HepG2 (cell line): ENCODE measurements at regions of chr4 and their contacts with region 1.

Region 1: DNA sequence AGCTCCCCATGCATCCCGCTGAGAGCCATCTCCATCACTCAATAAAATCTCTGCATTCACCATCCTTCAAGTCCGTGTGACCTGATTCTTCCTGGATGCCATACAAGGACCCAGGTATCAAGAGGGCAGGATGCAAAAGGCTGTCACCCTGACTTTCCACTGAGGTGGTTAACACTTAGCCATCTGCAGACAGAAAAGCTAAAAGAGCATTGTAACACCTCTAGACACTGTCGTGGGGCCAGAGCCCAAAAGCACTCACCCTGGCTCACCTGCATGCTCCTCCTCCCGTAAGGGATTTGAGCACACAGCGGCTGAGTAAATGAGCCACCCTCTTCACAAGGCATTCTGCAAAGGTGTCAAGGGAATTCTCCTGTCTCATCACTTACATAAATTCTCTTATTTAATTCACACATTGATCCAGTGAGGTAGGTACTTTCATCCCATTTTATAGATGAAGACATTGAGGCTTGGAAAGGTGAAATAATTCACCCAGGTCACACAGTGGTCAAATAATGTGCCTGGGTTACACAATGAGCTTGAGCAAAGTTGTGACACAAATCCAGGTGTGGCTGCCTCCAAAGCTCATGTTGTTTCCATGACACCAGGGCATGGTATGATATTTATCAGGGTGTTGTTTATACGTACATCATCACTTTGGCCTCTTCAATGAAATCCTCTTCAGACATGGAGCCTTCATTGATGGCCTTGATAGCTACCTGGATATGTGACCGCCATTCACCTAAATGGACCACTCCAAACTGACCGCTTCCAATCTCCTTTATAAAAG is 48.0 kb downstream of the TXK start:
- DNase-seq: no peak
- ATAC-seq: no peak
- H3K4me3 ChIP-seq: no peak overlapping the region
- H3K27ac ChIP-seq: no peak overlapping the region
- H3K4me1 ChIP-seq: no peaks in the 10 kb centered on the region
- H3K27me3 ChIP-seq: no peaks in the 10 kb centered on the region
- CTCF ChIP-seq: no peak
- EP300 ChIP-seq: no peak
- POLR2A ChIP-seq: no peak
- RAD21 ChIP-seq: no peak

Region 2: GRCh38 chr4:47926639-47927258 is 159.3 kb before region 1 on chr4:
- CTCF ChIA-PET with region 1: interaction called, 6 read pairs
- POLR2A ChIA-PET with region 1: no interaction called
- in situ Hi-C with region 1: no loop called
- intact Hi-C with region 1: loop called (anchors 2 kb)
- DNase-seq: peak; percentile 61
- ATAC-seq: peak; percentile 100
- H3K4me3 ChIP-seq: peak overlapping the region; percentile 3 to 64 (median 24); a peak in 3 of 6 replicates
- H3K27ac ChIP-seq: no peak overlapping the region
- H3K4me1 ChIP-seq: peaks cover 14% of the 10 kb centered on the region
- H3K27me3 ChIP-seq: no peaks in the 10 kb centered on the region
- CTCF ChIP-seq: peak; percentile 89
- EP300 ChIP-seq: no peak
- POLR2A ChIP-seq: no peak
- RAD21 ChIP-seq: 0 out of 2 replicates have a peak, but pooled peaks have one; percentile 11

Region 3: DNA sequence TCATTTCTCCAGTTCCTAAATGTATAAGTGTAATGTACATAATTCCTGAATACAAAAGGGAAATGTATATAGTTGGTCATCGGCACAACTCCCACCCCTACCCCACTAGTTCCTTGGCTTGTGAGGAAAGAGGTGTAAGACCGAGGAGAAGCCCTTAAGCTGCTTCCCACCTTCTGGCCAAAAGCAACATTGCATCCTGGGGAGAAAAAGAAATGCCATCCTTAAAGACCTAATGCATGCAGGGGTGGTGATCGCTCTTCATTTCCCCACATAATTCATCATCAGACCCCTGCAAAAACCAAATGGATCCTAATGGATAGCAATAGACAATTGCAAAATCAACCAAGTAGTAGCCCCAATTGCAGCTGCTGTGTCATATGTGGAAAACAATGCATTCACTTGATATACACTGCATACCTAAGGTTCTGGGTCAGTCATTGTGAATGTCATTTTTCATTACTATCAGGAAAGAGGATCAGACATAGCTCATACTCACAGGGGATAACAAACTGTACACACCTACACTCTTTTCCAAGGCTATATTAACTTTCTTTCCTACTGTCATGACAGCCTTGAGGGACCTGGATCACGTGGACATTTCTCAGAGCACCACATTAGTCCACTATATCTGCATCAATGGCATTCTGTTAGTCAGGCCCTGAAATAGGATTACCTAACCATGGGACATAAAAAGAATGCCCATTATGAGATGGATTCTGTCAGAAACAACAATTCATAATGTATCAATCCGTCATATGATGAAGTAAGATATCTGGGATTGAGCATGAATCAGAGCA is 139.9 kb before region 1 on chr4:
- CTCF ChIA-PET with region 1: no interaction called
- POLR2A ChIA-PET with region 1: no interaction called
- in situ Hi-C with region 1: no loop called
- intact Hi-C with region 1: no loop called
- DNase-seq: no peak
- ATAC-seq: no peak
- H3K4me3 ChIP-seq: no peak overlapping the region
- H3K27ac ChIP-seq: no peak overlapping the region
- H3K4me1 ChIP-seq: no peaks in the 10 kb centered on the region
- H3K27me3 ChIP-seq: no peaks in the 10 kb centered on the region
- CTCF ChIP-seq: no peak
- EP300 ChIP-seq: no peak
- POLR2A ChIP-seq: no peak
- RAD21 ChIP-seq: no peak

Region 4: GRCh38 chr4:48008021-48008596 is 77.9 kb before region 1 on chr4:
- CTCF ChIA-PET with region 1: interaction called, 24 read pairs
- POLR2A ChIA-PET with region 1: no interaction called
- in situ Hi-C with region 1: loop called (anchors 5 kb)
- intact Hi-C with region 1: loop called (anchors 1 kb)
- DNase-seq: no peak
- ATAC-seq: no peak
- H3K4me3 ChIP-seq: no peak overlapping the region
- H3K27ac ChIP-seq: no peak overlapping the region
- H3K4me1 ChIP-seq: no peaks in the 10 kb centered on the region
- H3K27me3 ChIP-seq: no peaks in the 10 kb centered on the region
- CTCF ChIP-seq: no peak
- EP300 ChIP-seq: no peak
- POLR2A ChIP-seq: no peak
- RAD21 ChIP-seq: no peak

Region 5: DNA sequence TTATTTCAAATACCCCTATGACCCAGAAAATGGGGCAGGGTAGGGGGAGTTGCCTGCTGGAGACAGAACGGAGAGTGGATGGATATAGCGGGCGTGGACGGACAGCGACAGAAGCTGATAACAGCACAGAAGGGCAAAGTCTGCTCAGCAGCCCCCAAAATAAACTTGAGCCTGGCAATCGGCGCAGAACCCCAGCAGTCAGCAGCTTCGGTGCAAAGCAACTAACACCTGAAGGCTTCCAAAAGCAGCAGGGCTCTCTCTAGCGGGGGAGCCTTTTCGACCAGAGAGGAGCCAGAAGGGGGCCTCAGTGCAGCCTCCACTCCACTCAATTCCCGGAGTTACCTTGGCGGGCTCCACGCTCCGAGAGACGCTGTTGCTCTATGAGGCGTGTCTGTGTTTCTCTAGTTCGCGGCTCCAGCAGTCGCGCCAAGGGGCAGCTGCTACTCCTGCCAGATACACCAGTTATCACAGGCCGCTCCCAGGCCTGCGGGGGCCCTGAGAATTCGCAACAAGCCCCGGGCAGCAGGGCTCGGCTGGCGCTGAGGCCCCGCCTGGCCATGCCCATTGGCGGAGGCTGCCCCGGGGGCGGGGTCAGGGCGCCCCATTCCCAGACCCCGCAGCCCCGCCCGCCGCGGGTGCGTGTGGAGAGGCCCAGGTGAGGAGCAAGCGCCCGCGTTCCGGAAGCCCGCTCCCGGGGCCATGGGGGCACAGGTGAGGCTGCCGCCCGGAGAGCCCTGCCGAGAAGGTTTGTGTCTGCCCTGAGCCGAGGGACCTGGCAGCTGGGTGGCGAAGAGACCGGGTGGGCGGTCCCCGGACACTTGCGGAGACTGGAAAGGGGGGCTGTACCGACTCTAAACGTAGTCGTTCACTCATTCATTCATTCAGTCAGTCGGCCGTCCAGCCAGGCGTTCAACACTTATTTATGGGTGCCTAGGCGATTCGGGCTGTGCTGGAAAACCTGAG is 69.6 kb before region 1 on chr4 and contains the starts of genes CNGA1 and NIPAL1:
- CTCF ChIA-PET with region 1: interaction called, 13 read pairs
- POLR2A ChIA-PET with region 1: no interaction called
- in situ Hi-C with region 1: no loop called
- intact Hi-C with region 1: loop called (anchors 1 kb)
- DNase-seq: peak; percentile 66
- ATAC-seq: peak; percentile 97
- H3K4me3 ChIP-seq: peak within 1 kb of the TSS; percentile 69 to 80 (median 76)
- H3K27ac ChIP-seq: peak within 1 kb of the TSS; percentile 74
- H3K4me1 ChIP-seq: peaks cover 20% of the 10 kb centered on the region
- H3K27me3 ChIP-seq: no peaks in the 10 kb centered on the region; a peak in 1 of 5 replicates
- CTCF ChIP-seq: peak; percentile 78
- EP300 ChIP-seq: 0 out of 4 replicates have a peak, but pooled peaks of 1 of the 2 experiments have one; percentile 15
- POLR2A ChIP-seq: peak in 1 of 2 experiments; percentile 67; a peak in 2 of 4 replicates
- RAD21 ChIP-seq: peak; percentile 56
- total RNA-seq, gene CNGA1: 0.22 TPM in 1 of 2 replicates, not detected in the other
- total RNA-seq, gene NIPAL1: 1.4 and 1.6 TPM in 2 replicates

Region 6: DNA sequence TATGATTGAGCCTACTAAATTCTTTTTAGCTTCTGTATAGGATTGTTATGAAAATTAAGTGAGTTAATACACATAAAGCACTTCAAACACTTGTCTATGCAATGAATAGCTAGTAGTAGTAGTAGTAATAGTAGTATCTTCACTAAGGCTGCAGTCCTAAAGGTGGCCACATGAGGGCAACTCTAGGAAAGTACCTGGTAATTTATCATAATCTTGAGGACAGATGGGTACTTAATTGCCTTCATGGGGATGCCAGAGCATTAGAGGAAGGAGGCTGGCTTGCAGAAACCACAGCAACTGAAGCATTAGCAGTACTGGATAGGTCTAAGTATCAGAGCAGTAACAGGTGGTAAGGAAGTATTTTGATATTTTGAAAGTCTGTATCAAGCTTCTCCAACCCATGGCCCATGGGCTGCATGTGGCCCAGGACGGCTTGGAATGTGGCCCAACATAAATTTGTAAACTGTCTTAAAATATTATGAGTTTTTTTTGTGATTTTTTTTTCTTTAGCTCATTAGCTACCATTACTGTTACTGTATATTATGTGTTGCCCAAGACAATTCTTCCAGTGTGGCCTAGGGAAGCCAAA is 52.1 kb before region 1 on chr4:
- CTCF ChIA-PET with region 1: interaction called, 8 read pairs
- POLR2A ChIA-PET with region 1: no interaction called
- in situ Hi-C with region 1: no loop called
- intact Hi-C with region 1: loop called (anchors 1 kb)
- DNase-seq: peak; percentile 28
- ATAC-seq: peak; percentile 72
- H3K4me3 ChIP-seq: no peak overlapping the region
- H3K27ac ChIP-seq: no peak overlapping the region
- H3K4me1 ChIP-seq: peaks cover 38% of the 10 kb centered on the region
- H3K27me3 ChIP-seq: no peaks in the 10 kb centered on the region
- CTCF ChIP-seq: peak; percentile 55
- EP300 ChIP-seq: no peak
- POLR2A ChIP-seq: no peak
- RAD21 ChIP-seq: no peak

Region 7: GRCh38 chr4:48162162-48162561 is 76.1 kb after region 1 on chr4:
- CTCF ChIA-PET with region 1: no interaction called
- POLR2A ChIA-PET with region 1: no interaction called
- in situ Hi-C with region 1: no loop called
- intact Hi-C with region 1: no loop called
- DNase-seq: no peak
- ATAC-seq: no peak
- H3K4me3 ChIP-seq: no peak overlapping the region
- H3K27ac ChIP-seq: no peak overlapping the region
- H3K4me1 ChIP-seq: no peaks in the 10 kb centered on the region
- H3K27me3 ChIP-seq: no peaks in the 10 kb centered on the region
- CTCF ChIP-seq: no peak
- EP300 ChIP-seq: no peak
- POLR2A ChIP-seq: no peak
- RAD21 ChIP-seq: no peak